Motor neuron (in vitro differentiated cells): ENCODE measurements at regions of chr15 and their contacts with region 1.

Region 1: DNA sequence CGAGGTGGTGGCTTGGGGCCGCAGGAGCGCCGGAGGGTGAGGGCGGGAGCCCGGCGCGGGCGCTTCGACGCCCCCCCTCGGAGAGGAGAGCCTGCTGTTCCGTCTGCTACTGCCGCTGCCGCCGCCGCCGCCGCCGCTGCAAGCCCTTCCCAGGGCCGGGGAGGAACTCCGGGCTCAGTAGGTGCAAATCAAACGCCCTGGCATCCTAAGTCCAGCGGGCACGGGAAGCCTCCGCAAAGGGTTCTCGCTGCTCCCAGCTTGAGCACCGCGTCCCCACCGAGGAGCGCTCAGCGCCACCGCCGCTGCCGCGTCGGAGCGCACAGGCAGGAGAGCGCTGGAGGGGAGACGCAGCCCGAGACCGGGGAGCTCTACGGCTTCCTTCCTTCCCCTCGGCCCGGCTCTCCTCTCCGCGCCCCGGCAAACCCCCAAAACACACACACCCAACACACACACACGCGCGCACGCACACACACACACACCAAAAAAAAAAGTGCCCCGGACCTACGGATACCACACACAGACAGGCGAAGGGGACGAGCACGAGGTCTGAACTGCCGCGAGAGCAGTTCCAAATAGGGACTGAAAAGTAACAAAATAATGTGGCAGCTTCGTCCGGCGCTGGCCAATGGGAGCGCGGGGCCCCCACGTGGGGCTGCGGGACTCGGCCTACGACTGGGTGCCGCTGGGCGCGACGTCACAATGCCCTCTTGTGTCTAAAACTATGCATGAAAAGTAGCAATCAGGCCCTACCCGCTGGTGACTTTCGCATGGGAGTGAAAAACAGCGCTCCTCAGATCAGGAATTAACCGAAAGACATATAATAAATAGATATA is at the start of gene TLE3:
- ATAC-seq: peak; percentile 46 to 67 (median 54)
- H3K4me3 ChIP-seq: peak within 1 kb of the TSS; percentile 59 to 97 (median 83)
- H3K27ac ChIP-seq: peak within 1 kb of the TSS; percentile 87 to 88
- H3K4me1 ChIP-seq: peaks cover 32 to 51% of the 10 kb centered on the region in 2 donors
- total RNA-seq, gene TLE3: 28.2 to 103 (median 52.5) TPM

Region 2: GRCh38 chr15:69557340-69558137 is 540.0 kb before region 1 on chr15:
- in situ Hi-C with region 1: no loop called
- ATAC-seq: peak; percentile 63 to 97 (median 92)
- H3K4me3 ChIP-seq: no peak overlapping the region
- H3K27ac ChIP-seq: no peak overlapping the region
- H3K4me1 ChIP-seq: peaks cover 35 to 37% of the 10 kb centered on the region in 2 donors

Region 3: DNA sequence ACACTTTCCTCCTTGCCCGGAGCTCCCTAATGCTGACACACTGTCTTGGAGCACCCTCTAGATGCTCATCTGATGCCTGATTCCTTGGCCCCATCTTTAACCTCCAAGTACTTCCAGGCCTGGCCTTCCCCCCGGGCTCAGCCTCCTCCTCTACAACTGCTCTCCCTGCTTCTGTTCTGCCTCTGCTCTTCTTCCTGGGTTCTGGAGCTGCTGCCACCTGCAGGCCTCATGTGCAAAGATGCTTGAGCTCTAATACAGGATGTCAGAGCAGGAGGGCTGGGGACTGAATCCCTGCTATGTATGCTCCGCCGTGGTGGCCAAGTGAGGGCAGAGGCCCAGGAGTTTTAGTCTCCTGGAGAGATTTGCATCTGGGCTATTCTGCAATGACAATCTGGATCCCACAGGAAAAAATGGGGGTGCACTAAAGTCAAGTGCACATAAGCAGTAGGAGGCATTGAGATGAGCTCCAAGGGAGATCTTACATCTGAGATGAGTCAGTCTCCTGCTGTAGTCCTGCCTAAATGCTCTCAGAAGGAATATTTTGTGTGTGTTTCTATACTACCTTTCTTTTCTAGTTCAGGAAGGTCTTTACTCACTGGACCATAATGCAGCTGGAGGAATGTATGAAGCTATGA is 369.5 kb after region 1 on chr15:
- in situ Hi-C with region 1: loop called in 1 of 9 experiments (anchors 25 kb)
- ATAC-seq: peak; percentile 79 to 93 (median 90)
- H3K4me3 ChIP-seq: no peak overlapping the region
- H3K27ac ChIP-seq: no peak overlapping the region
- H3K4me1 ChIP-seq: peaks cover 7 to 18% of the 10 kb centered on the region in 2 donors

Region 4: DNA sequence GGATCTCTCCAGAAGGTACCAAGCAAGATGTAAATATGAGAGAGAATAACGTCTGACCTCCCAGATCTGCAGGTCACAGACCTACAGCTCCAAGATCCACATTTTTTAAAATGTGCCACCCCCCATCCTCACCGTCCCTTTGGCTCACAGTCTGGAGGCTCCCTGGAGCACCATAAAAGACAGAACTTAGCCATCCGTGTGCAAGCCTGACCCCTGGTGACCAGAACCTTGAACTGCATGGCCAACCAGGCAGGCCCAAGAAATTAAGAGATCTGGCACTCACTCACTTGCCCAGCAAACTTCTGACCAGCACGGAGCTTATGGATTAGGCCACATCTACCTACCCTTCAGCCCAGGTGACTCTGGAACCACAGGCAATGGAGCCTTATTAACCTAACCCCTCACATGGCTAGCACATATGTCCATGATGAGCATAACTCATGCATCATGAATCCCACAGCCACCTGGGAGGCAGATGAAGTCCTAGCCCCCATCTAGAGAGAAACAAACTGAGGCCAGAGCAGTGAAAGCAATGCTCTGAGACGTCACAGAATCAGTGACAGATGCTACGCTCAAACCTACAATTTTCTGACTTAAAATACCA is 390.6 kb after region 1 on chr15:
- in situ Hi-C with region 1: loop called in 2 of 9 experiments (anchors 25 kb)
- ATAC-seq: peak; percentile 31 to 78 (median 72)
- H3K4me3 ChIP-seq: no peak overlapping the region
- H3K27ac ChIP-seq: no peak overlapping the region
- H3K4me1 ChIP-seq: peaks cover 8 to 12% of the 10 kb centered on the region in 2 donors